Panc1 (cell line): ENCODE measurements at regions of chr6 and their contacts with region 1.

Region 1: DNA sequence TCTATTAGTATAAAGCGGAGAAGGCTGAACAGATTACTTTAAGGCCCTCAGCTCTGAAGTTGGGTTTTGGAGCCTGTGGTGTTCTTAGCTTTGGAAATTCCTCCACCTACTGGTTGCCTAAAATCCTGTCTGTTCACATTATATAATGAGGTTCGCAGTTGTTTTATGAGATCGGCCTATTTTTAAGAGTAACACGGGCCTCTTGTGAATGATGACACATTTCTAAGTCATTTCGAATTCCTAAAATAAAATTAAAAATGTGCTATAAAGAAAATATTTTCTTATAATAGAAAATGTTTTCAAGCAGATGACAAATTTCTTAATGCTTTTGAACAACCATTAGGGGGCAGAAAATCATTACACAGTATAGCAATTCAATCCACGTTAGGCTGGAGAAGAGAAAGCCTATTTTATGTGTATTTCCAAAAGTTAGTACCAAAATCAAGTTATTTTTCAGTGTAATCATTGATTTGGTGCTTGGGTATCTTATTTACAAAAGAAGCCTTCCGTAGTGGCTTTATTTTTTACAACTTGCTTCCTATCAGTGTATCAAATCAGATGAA is 15.8 kb upstream of the FAM8A1 start:
- DNase-seq: peak; percentile 61
- ATAC-seq: peak; percentile 86
- H3K4me3 ChIP-seq: no peak overlapping the region; a peak in 1 of 4 replicates
- H3K27ac ChIP-seq: no peak overlapping the region
- H3K4me1 ChIP-seq: 0 out of 2 replicates have a peak, but pooled peaks cover 3% of the 10 kb centered on the region
- H3K27me3 ChIP-seq: no peaks in the 10 kb centered on the region
- CTCF ChIP-seq: peak; percentile 85

Region 2: GRCh38 chr6:17156112-17156921 is 428.0 kb before region 1 on chr6:
- CTCF ChIA-PET with region 1: interaction called, 7 read pairs
- POLR2A ChIA-PET with region 1: no interaction called
- in situ Hi-C with region 1: no loop called
- intact Hi-C with region 1: loop called (anchors 1 kb)
- DNase-seq: peak; percentile 69
- ATAC-seq: peak; percentile 89
- H3K4me3 ChIP-seq: no peak overlapping the region
- H3K27ac ChIP-seq: no peak overlapping the region
- H3K4me1 ChIP-seq: no peaks in the 10 kb centered on the region
- H3K27me3 ChIP-seq: no peaks in the 10 kb centered on the region
- CTCF ChIP-seq: peak; percentile 72; the same call in 1 of the 2 replicates

Region 3: GRCh38 chr6:17281100-17281494 is 303.2 kb before region 1 on chr6 and contains the start of gene RBM24:
- CTCF ChIA-PET with region 1: interaction called, 5 read pairs
- POLR2A ChIA-PET with region 1: no interaction called
- in situ Hi-C with region 1: no loop called
- intact Hi-C with region 1: loop called (anchors 10 kb)
- DNase-seq: no peak
- ATAC-seq: peak; percentile 73
- H3K4me3 ChIP-seq: peak within 1 kb of the TSS; percentile 83 to 89
- H3K27ac ChIP-seq: peak within 1 kb of the TSS; percentile 89
- H3K4me1 ChIP-seq: peaks cover 31% of the 10 kb centered on the region
- H3K27me3 ChIP-seq: no peaks in the 10 kb centered on the region
- CTCF ChIP-seq: peak; percentile 68
- total RNA-seq, gene RBM24: 23.0 TPM

Region 4: DNA sequence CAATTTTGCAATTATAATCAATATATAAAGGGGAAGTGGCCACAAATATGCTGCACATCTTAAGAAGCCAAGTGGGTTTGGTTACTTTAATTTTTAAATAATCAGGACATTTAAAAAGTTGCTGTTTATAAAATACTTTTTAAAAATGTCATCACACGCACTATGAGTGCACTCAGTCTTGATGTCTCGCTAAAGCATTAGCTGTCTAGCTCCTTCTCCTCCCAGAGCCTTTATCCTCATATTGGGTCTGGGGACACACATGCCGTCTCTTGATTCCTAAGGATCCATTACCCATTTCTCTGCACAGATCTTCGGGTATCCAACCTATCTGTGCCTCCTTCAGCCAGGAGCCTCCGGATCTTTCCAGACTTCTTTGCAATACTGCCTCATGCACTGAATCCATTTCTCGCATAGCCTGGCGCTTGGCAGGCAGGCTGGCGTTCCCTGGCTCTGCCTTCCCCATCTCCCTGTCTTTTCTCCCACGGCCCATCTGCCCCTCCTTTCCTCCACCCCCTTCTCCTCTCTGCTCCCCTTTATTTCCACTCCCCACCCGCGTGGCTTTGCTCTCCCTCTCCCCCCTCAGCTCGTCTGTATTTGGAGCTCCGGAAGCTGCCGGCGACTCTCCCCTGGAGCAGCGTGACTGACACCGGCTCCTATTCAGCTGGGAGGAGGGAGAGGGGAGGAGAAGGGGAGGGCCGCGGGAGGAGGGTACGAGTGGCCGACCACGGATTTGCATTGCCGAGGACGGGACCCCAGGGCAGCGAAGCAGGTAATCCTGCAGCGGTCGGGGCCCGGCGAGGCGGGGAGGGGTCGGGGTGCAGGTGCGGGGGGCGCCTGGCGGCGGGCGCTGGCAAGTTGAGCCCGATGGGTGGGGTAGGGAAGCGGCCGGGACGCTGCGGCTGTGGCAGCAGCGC is 191.1 kb before region 1 on chr6 and contains the start of gene CAP2:
- CTCF ChIA-PET with region 1: no interaction called
- POLR2A ChIA-PET with region 1: no interaction called
- in situ Hi-C with region 1: no loop called
- intact Hi-C with region 1: loop called (anchors 10 kb)
- DNase-seq: no peak
- ATAC-seq: peak; percentile 96
- H3K4me3 ChIP-seq: peak within 1 kb of the TSS; percentile 70 to 75
- H3K27ac ChIP-seq: peak within 1 kb of the TSS; percentile 96
- H3K4me1 ChIP-seq: peaks cover 14% of the 10 kb centered on the region; the same call in 1 of the 2 replicates
- H3K27me3 ChIP-seq: no peaks in the 10 kb centered on the region
- CTCF ChIP-seq: no peak
- total RNA-seq, gene CAP2: 37.0 TPM

Region 5: DNA sequence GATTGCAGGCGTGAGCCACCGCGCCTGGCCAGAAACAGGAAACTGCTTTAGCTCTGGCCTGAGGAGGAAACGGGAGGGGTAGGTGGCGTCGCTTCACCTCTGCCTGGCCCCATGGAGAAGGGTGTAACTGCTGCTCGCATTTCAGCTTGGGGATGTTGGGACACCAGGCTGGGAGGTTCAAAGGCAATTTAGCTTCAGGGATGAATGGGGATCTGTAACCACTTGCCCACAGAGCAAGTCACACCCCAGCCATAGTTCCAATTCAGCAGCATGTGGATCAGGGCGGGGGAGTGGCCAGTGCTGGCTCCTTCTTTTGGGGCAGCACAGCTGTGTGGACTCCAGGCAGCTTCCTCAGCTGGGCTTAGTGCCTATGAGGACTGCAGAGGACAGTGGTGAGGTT is 157.2 kb after region 1 on chr6:
- CTCF ChIA-PET with region 1: interaction called, 11 read pairs
- POLR2A ChIA-PET with region 1: no interaction called
- in situ Hi-C with region 1: no loop called
- intact Hi-C with region 1: no loop called
- DNase-seq: no peak
- ATAC-seq: peak; percentile 40; the same call in 1 of the 2 replicates
- H3K4me3 ChIP-seq: no peak overlapping the region
- H3K27ac ChIP-seq: no peak overlapping the region
- H3K4me1 ChIP-seq: no peaks in the 10 kb centered on the region
- H3K27me3 ChIP-seq: no peaks in the 10 kb centered on the region
- CTCF ChIP-seq: no peak